ENCODE measurements at regions of chrX and their contacts with region 1.

Region 1: DNA sequence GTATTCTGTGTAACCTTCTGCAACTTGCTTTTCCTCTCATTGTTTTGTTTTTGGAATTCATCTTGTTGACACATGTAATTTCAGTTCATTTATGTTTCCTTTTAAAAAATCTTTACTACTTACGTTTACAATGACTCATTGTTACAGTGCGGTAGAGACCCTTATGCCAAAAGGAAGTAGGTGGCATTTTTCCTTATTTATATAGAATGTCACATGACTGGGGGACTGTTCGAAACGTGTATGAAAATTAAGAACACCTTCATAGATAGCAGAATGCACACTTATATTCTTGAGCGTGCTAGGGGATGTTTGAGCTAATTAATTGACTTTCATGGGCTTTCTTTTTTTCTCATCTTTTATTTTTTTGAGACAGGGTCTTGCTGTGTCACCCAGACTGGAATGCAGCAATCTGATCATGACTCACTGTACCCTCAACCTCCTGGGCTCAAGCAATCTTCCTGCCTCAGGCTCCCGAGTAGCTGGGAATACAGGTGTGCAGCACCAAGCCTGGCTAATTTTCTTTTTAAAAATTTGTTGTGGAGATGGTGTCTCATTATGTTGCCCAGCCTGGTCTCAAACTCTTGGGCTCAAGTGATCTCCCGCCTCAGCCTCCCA is 7.3 kb downstream of the REPS2 start:
- DNase-seq: no peak

Region 2: DNA sequence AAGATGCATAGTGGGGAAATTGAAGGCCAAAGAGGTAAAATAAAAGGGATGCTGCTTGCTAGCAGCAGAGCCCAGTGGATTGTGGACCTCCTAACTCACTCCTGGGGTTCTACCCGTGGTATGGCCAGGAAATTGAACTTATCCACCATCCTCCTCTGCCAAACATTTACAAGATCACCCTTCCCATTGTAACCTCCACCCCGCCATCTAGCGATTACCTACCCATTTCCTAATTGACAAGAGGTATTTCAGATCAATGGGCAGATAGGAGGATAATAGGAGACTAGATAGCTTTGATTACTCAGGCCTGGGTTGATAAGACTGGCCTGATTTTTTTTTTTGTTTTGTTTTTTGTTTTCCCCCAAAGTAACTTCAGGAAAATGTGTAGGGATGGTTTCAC is 60.5 kb after region 1 on chrX:
- intact Hi-C with region 1: loop called in 1 of 2 experiments (anchors 2 kb)
- DNase-seq: no peak

Region 3: DNA sequence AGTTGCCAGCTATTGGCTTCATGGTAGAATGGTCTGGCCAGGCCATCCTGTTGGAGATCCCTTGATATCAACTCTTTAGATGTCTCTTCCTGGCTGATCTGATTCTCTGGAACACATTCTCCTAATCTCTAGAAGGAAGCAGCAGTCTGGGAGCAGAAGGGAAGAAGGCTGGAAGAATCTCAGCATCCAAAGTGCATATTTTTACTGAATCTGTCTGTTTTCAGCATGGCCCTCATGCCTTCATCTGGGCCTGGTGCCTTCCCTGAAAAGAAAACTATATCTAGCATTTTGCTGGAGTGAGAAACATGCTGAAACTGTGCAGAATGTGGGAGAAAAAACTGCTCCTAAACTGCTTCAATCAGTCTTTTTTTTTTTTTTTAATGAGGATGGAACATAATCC is 141.4 kb after region 1 on chrX:
- intact Hi-C with region 1: no loop called
- DNase-seq: no peak